Panc1 (cell line): ENCODE measurements at regions of chr19 and their contacts with region 1.

Region 1: DNA sequence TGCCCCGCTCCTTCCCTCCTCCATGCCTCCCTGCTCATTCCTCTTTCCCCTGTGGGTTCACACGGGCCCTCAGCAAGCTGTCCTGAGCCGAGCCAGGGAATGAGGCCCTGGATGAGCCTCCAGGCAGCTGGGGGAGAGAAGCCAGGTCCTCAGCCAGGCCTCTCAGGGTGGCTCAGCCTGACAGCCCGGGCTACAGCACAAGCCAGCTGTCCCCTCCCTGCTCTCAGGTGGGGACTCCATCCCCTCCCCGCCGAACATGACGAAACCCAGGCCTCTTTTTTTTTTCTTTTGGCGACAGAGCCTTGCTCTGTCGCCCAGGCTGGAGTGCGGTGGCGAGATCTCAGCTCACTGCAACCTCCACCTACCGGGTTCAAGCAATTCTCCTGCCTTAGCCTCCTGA is 40.0 kb upstream of the MATK start:
- DNase-seq: no peak
- ATAC-seq: no peak
- H3K4me3 ChIP-seq: no peak overlapping the region
- H3K27ac ChIP-seq: no peak overlapping the region
- H3K4me1 ChIP-seq: no peaks in the 10 kb centered on the region
- H3K27me3 ChIP-seq: no peaks in the 10 kb centered on the region
- CTCF ChIP-seq: no peak

Region 2: DNA sequence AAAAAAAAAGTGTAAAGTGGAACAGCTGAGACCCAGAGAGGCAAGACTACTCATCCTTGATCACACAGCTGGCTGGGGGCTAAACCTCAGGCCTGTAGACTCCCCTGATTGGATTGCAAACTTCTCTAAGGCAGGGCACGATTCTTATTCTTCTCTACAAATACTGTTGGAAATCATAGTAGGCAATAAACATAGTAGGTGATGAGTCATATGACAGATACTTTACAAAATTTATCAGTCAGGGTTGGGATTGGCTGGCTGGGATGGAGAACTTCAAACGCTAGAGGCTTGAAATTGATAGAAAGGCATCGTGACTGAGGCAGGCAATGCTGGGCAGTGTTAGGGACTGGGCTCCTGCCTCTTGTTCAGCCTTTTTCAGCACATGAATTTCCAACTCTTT is 34.0 kb before region 1 on chr19:
- CTCF ChIA-PET with region 1: interaction called, 10 read pairs
- POLR2A ChIA-PET with region 1: no interaction called
- in situ Hi-C with region 1: no loop called
- intact Hi-C with region 1: no loop called
- DNase-seq: no peak
- ATAC-seq: no peak
- H3K4me3 ChIP-seq: no peak overlapping the region
- H3K27ac ChIP-seq: no peak overlapping the region
- H3K4me1 ChIP-seq: no peaks in the 10 kb centered on the region
- H3K27me3 ChIP-seq: no peaks in the 10 kb centered on the region
- CTCF ChIP-seq: no peak